Left cardiac atrium (tissue), 4 donors: ENCODE measurements at regions of chr5 and their contacts with region 1.

Region 1: DNA sequence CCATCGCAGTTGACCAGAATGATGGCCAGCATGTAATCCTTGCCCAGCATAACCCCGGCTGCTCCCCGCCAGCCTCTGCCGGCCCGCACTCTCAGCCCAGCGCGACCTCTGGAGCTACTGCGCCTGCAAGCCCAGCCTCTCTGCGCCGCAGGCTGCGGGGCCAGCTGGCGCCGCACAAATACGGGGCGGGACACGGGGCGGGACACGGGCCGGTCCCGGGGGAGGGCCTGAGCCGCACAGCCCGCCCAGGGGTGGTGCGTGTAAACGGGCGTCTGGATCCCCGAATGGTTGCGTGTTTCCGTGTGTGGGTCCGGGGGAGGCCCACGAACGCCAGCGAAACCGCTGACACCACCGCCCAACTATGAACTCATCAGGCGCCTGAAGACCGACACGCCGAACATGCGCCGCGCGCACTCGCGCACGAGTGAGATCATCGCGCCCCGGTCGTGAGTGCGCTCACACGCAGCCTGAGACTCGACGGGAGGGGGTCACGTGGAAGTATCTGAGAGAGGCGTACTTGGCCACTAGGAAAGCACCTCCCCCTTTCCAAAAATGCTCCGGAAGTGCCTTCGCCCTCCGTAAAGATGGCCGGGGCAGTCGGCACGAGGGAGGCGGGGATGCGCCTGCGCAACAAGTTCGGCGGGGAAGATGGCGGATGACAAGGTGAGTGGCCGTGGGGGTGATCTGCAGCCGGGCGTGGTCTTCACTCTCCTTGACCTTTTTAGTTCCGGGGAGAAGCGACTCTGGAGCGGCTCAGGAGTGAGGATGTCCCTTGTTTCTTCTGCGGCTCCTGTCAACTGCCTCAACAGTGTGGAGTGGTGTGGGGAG is at the starts of genes APBB3 and SLC35A4:
- DNase-seq: peak; percentile 98
- ATAC-seq: peak; percentile 94 to 95
- total RNA-seq, gene APBB3: 11.4 to 14.3 TPM
- total RNA-seq, gene SLC35A4: 70.3 to 79.3 TPM

Region 2: DNA sequence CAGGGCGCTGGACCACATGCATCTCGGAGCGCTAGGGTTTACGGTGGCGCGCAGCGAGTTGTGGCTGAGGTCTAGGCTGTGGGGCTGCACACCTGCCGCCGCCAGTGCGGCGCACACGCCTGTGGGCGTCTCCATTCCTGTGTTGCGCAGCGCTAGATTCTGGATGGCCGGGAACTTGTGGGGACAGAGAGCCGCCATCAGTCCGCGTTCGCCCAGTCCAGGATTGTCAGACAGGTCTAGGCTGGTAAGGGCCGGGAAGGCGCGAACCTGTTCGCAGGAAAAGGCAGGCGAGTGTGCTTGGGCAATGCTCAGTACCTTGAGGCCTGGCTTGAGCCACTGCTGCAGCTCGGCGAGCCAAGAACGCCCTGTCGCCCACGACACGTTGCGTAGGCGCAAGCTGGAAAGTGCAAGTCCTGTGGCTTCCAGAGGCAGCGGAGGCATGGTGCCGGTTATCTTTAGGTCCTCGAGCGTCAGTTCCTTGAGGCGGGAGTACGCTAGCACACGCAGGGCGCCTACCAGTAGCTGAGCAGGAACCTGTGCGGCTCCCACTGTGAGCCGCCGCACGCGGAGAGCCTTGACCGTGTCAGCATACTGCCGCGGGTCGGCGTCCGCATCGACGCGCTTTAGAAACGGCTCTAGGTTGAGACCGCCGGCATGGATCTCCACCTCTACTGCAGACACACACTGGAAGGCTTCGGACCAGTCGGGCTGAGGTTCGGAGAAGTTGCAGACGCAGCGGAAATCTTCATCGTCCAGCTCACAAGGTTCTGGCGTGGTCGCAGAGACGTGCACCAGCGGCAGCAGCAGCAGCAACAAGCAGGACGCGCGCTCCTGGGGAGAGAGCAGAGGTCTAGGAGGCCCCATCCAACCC is 68.0 kb after region 1 on chr5:
- intact Hi-C with region 1: loop called in 1 of 2 experiments (anchors 5 kb)
- DNase-seq: peak; percentile 76
- ATAC-seq: peak; percentile 65 to 74